OCI-LY7 (cell line): ENCODE measurements at regions of chr19 and their contacts with region 1.

Region 1: DNA sequence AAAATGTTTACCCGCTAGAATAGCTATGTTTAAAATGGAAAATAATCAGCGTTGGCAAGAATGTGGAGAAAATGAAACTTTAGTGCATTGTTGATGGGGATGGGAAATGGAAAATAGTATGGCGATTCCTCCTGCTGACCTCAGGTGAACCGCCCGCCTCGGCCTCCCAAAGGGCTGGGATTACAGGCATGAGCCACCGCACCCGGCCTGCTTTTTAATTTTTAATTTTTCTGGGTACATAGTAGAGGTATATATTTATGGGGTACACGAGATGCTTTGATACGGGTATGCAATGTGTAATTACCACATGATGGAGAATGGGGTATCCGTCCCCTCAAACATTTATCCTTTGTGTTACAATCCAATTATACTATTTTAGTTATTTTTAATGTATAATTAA is 7.3 kb upstream of the NLRP8 start:
- DNase-seq: no peak
- H3K4me3 ChIP-seq: no peak overlapping the region
- H3K27ac ChIP-seq: no peak overlapping the region
- H3K4me1 ChIP-seq: peaks cover 14% of the 10 kb centered on the region
- CTCF ChIP-seq: no peak

Region 2: GRCh38 chr19:55809381-55810058 is 130.8 kb before region 1 on chr19:
- CTCF ChIA-PET with region 1: no interaction called
- POLR2A ChIA-PET with region 1: interaction called, 5 read pairs
- intact Hi-C with region 1: loop called (anchors 10 kb)
- DNase-seq: peak; percentile 89
- H3K4me3 ChIP-seq: peak overlapping the region; percentile 66
- H3K27ac ChIP-seq: peak overlapping the region; percentile 30
- H3K4me1 ChIP-seq: peaks cover 60% of the 10 kb centered on the region
- CTCF ChIP-seq: peak; percentile 85

Region 3: GRCh38 chr19:55820037-55820436 is 120.3 kb before region 1 on chr19:
- CTCF ChIA-PET with region 1: no interaction called
- POLR2A ChIA-PET with region 1: no interaction called
- intact Hi-C with region 1: no loop called
- DNase-seq: peak; percentile 66
- H3K4me3 ChIP-seq: peak overlapping the region; percentile 62
- H3K27ac ChIP-seq: peak overlapping the region; percentile 90
- H3K4me1 ChIP-seq: peaks cover 70% of the 10 kb centered on the region
- CTCF ChIP-seq: no peak